CD8-positive, alpha-beta memory T cell (primary cell): ENCODE measurements at regions of chr10 and their contacts with region 1.

Region 1: GRCh38 chr10:73848821-73849489 is 25.4 kb downstream of the CAMK2G start:
- DNase-seq: peak; percentile 84 to 92 (median 88)
- H3K4me3 ChIP-seq: no peak overlapping the region
- H3K4me3 Mint-ChIP-seq: peak overlapping the region in 6 of 7 donors; percentile 22 to 76 (median 64)
- H3K27ac ChIP-seq: no peak overlapping the region
- H3K27ac Mint-ChIP-seq: peak overlapping the region; percentile 71 to 94 (median 92)
- H3K4me1 ChIP-seq: peaks cover 16% of the 10 kb centered on the region
- H3K4me1 Mint-ChIP-seq: peaks cover 17 to 21% (median 21%) of the 10 kb centered on the region in 3 donors
- H3K27me3 ChIP-seq: no peaks in the 10 kb centered on the region
- H3K27me3 Mint-ChIP-seq: no peaks in the 10 kb centered on the region

Region 2: DNA sequence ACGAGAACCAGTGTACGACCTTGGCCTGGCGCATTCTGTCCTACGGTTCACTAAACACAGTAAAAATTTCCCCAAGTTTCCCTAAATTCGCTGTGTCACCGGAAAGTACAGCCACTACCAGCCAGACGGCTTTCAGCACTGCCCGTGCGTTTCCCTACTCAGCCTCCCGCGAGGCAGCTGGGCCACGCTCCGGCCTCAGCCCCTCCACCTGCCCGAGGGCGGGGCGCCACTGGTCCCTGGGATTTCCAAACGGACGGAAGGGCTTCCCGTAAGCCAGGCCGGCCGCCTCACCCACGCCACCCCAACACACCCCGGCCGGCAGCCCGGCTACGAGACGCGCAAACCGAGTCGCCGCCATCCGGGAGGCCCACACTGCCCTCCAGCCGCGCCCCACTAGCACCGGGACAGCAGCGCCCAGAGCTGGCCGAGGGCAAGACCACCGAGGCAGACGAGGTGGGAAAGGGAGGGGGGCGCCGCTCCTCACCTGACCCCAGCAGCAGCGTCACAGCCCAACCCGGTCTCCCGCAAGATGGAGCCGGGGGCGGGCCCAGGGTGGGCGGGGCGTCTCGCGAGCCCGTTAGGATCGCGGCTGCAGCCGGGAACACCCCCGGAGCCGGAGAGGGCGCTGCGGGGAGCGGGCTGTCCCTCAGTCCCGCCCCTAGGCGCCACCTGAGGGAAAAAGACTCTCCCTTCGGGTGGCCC is 435.3 kb before region 1 on chr10 and contains the start of gene ANXA7:
- CTCF ChIA-PET with region 1: no interaction called
- POLR2A ChIA-PET with region 1: no interaction called
- DNase-seq: peak; percentile 85 to 94 (median 93)
- H3K4me3 ChIP-seq: peak within 1 kb of the TSS; percentile 88
- H3K4me3 Mint-ChIP-seq: peak within 1 kb of the TSS; percentile 91 to 98 (median 96)
- H3K27ac ChIP-seq: peak within 1 kb of the TSS; percentile 94
- H3K27ac Mint-ChIP-seq: peak within 1 kb of the TSS; percentile 44 to 97 (median 95)
- H3K4me1 ChIP-seq: peaks cover 27% of the 10 kb centered on the region
- H3K4me1 Mint-ChIP-seq: peaks cover 43 to 58% (median 58%) of the 10 kb centered on the region in 3 donors
- H3K27me3 ChIP-seq: no peaks in the 10 kb centered on the region
- H3K27me3 Mint-ChIP-seq: peaks cover 0 to 2% of the 10 kb centered on the region in 2 donors
- total RNA-seq, gene ANXA7: 151 to 154 TPM

Region 3: DNA sequence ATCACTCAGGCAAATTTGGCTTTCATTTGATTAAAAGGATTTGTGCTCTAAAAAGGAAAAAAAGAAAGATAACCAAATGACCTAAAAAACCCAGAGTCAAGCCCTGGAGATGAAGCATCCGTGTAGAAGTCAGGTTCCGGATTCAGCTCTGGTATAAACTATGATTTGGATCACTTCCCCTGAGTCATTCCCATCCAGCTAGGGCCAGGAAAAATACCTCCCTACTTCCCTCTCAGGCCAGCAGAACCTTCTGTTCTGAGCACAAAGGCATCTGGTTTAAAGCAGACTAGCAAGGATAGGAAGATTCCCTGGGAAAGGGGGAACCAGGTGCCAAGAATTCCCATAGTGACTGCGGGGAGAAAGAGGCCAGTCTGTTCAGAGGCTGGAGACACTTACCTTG is 11.9 kb before region 1 on chr10:
- CTCF ChIA-PET with region 1: interaction called, 27 read pairs
- POLR2A ChIA-PET with region 1: no interaction called
- DNase-seq: no peak
- H3K4me3 ChIP-seq: no peak overlapping the region
- H3K4me3 Mint-ChIP-seq: no peak overlapping the region
- H3K27ac ChIP-seq: no peak overlapping the region
- H3K27ac Mint-ChIP-seq: peak overlapping the region in 3 of 8 donors; percentile 11 to 66 (median 17)
- H3K4me1 ChIP-seq: no peaks in the 10 kb centered on the region
- H3K4me1 Mint-ChIP-seq: no peaks in the 10 kb centered on the region
- H3K27me3 ChIP-seq: no peaks in the 10 kb centered on the region
- H3K27me3 Mint-ChIP-seq: no peaks in the 10 kb centered on the region

Region 4: DNA sequence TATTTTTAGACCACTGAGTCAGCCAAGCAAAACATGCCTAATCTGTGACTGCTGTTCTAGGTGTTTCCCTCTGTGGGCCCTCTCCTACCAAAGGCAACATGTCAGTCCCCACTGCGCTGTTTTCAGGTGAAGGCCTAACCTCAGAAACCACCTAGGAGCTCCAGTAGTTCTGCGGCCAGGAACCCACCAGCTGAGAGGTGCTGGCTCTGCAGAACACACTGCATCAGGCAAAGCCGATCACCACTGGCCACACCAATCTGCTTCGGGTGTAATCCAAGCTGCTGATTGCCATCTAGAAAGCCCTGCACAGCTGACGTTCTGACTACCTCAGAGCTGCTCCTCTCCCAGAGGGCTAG is 10.5 kb after region 1 on chr10:
- CTCF ChIA-PET with region 1: interaction called, 15 read pairs
- POLR2A ChIA-PET with region 1: interaction called, 4 read pairs
- DNase-seq: peak in 4 of 5 donors; percentile 31 to 67 (median 50)
- H3K4me3 ChIP-seq: peak overlapping the region; percentile 5
- H3K4me3 Mint-ChIP-seq: peak overlapping the region in 6 of 7 donors; percentile 47 to 82 (median 68)
- H3K27ac ChIP-seq: peak overlapping the region; percentile 21
- H3K27ac Mint-ChIP-seq: peak overlapping the region; percentile 70 to 98 (median 92)
- H3K4me1 ChIP-seq: peaks cover 63% of the 10 kb centered on the region
- H3K4me1 Mint-ChIP-seq: peaks cover 67 to 90% (median 80%) of the 10 kb centered on the region in 3 donors
- H3K27me3 ChIP-seq: no peaks in the 10 kb centered on the region
- H3K27me3 Mint-ChIP-seq: no peaks in the 10 kb centered on the region

Region 5: DNA sequence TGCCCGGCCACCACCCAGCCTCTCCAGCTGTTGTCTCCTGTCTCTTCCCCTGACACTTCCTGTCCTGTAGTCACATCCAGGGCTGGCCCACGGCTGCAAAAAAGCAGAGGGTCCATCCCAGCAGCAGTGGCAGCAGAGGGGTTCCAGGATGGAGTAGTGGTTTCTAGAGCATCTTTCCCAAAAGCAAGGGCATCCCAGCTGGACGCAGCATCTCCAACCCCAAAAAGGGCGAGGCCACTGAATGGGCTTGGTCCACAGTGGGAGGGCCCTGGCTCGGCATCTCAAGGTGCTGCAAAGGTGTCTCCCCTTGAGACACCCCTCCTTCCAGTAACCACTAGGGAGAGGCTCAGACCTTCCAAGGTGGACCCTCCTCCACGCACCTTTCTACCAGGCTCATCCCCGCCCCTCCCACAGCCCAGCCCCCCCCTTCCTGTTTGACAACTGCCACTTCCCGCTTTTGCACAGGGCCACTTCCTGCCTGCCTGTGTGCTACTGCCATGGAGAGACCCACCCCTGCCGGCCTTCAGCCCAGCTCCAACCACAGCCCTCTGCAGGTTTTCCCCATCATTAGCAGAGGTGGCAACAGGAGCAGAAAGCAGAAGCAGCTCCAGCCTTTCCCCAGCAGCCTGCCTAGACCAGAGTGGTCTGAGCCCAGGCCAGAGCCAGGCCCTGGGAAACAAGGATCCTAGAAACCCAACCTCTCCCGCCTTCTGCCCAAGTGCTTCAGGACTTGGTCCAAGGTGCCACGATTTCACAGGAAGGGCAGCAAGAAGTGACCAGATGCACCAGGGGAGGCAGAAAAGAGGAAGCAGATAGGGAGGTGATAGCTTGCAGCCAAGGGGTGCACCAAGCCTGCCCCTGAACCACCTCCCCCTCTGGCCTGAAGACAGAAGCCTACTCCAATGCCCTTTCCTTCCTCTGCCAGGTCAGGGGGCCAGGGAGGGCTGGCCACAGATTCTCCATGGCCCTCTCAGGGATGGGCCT is 16.8 kb after region 1 on chr10:
- CTCF ChIA-PET with region 1: interaction called, 12 read pairs
- POLR2A ChIA-PET with region 1: no interaction called
- DNase-seq: peak; percentile 37 to 68 (median 44)
- H3K4me3 ChIP-seq: peak overlapping the region; percentile 71
- H3K4me3 Mint-ChIP-seq: peak overlapping the region; percentile 80 to 91 (median 85)
- H3K27ac ChIP-seq: peak overlapping the region; percentile 49
- H3K27ac Mint-ChIP-seq: peak overlapping the region; percentile 90 to 99 (median 96)
- H3K4me1 ChIP-seq: peaks cover 76% of the 10 kb centered on the region
- H3K4me1 Mint-ChIP-seq: peaks cover 74 to 94% (median 83%) of the 10 kb centered on the region in 3 donors
- H3K27me3 ChIP-seq: no peaks in the 10 kb centered on the region
- H3K27me3 Mint-ChIP-seq: no peaks in the 10 kb centered on the region

Region 6: DNA sequence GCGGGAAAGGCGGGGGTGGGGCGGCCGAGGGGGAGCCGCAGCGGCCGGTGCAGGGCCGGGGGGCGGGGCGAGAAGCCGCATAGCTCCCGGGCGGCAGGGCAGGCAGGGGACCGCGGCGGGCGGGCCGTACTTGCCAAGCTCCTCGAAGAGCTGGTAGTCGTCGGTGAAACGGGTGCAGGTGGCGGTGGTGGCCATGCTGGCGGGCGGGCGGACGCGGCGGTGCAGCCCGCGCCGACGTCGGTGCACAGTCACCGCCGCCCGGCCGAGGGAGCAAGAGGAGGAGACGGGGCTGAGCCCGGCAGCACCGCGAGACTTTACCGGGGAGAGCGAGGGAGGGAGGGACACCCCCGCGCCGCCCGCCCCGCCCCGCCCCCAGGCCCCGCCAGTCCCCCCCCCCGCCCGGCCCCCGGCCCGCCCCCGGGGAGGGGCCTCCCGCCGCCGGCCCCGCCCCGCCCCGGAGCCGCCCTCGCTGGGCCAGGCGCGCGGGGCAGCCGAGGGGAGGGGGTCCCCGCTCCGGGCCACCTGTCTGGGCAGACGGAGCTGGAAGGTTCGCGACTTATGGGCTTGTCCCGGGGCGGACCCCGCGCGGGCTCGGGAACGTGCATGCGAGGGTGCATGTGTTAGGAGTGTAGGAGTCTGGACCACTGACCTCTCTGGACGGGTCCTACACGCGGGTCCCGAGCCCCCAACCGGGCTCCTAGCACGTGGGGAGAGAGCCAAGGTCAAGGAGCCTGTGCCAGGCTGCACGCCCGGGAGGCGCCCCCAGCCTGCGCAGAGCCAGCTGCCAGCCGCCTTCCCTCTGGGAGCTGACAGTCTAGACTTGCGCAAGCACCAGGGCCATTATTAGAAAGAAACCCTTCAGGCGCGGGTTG is 25.5 kb after region 1 on chr10 and contains the start of gene CAMK2G:
- CTCF ChIA-PET with region 1: interaction called, 289 read pairs
- POLR2A ChIA-PET with region 1: interaction called, 16 read pairs
- DNase-seq: peak; percentile 76 to 91 (median 82)
- H3K4me3 ChIP-seq: peak within 1 kb of the TSS; percentile 69
- H3K4me3 Mint-ChIP-seq: peak within 1 kb of the TSS; percentile 85 to 98 (median 89)
- H3K27ac ChIP-seq: peak within 1 kb of the TSS; percentile 78
- H3K27ac Mint-ChIP-seq: peak within 1 kb of the TSS; percentile 86 to 97 (median 92)
- H3K4me1 ChIP-seq: peaks cover 57% of the 10 kb centered on the region
- H3K4me1 Mint-ChIP-seq: peaks cover 50 to 78% (median 52%) of the 10 kb centered on the region in 3 donors
- H3K27me3 ChIP-seq: no peaks in the 10 kb centered on the region
- H3K27me3 Mint-ChIP-seq: no peaks in the 10 kb centered on the region
- total RNA-seq, gene CAMK2G: 17.3 to 17.5 TPM